Cardiac septum (tissue), 1 donor: ENCODE measurements at regions of chr15 and their contacts with region 1.

Region 1: GRCh38 chr15:75201609-75202250 is at the start of gene C15orf39:
- DNase-seq: peak; percentile 89
- total RNA-seq, gene C15orf39: 12.9 TPM

Region 2: GRCh38 chr15:74956648-74957300 is 245.0 kb before region 1 on chr15 and contains the start of gene RPP25:
- intact Hi-C with region 1: loop called (anchors 5 kb)
- DNase-seq: peak; percentile 92
- total RNA-seq, gene RPP25: 1.8 TPM

Region 3: GRCh38 chr15:75029378-75030022 is 172.2 kb before region 1 on chr15:
- intact Hi-C with region 1: loop called (anchors 1 kb)
- DNase-seq: peak; percentile 96

Region 4: GRCh38 chr15:75042730-75043508 is 158.8 kb before region 1 on chr15:
- intact Hi-C with region 1: loop called (anchors 1 kb)
- DNase-seq: peak; percentile 97

Region 5: DNA sequence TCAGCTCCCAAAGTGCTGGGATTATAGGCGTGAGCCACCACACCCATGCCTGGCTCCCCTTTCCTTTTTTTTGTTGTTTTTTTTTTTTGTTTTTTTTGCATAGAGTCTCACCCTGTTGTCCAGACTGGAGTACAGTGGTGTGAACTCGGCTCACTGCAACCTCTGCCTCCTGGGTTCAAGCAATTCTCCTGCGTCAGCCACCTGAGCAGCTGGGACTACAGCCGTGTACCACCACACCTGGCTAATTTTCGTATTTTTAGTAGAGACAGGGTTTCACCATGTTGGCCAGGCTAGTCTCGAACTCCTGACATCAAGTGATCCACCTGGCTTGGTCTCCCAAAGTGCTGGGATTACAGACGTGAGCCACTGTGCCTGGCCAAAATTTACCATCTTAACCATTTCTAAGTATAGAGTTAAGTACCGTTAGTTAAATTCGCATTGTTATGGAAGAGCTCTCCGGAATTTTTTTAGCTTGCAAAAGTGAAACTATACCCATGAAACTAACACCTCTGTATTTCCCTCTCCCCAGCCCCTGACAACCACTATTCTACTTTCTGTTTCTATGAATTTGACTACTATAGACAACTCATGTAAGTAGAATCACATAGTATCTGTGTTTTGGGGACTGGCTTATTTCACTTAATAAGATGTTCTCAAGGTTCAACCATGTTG is 71.0 kb before region 1 on chr15:
- intact Hi-C with region 1: no loop called
- DNase-seq: no peak

Region 6: GRCh38 chr15:76285239-76285825 is 1083.6 kb after region 1 on chr15:
- intact Hi-C with region 1: no loop called
- DNase-seq: no peak